PC-3 (cell line): ENCODE measurements at regions of chr12 and their contacts with region 1.

Region 1: DNA sequence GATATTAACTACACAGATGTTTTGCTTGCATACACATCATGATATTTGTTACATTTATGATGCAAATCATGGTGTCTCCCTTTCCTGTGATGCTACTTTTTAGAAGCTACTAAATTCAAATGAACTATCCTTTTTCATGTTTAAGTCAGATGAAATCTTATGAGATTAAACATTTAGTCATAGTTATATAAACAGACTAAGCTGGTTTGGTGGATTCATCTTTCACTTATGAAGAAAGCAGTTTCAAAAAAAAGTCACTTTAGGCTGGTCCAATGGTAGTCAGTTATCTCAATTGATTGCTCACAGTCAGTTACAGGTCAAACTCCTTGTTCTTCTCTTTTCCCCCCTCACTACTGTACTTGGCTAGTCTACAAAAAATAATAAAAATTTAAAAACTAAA is 19.7 kb downstream of the SYCP3 start:
- DNase-seq: peak; percentile 75
- ATAC-seq: peak; percentile 97
- H3K4me3 ChIP-seq: no peak overlapping the region
- H3K27ac ChIP-seq: no peak overlapping the region
- H3K4me1 ChIP-seq: peaks cover 15% of the 10 kb centered on the region
- H3K27me3 ChIP-seq: no peaks in the 10 kb centered on the region
- CTCF ChIP-seq: no peak

Region 2: DNA sequence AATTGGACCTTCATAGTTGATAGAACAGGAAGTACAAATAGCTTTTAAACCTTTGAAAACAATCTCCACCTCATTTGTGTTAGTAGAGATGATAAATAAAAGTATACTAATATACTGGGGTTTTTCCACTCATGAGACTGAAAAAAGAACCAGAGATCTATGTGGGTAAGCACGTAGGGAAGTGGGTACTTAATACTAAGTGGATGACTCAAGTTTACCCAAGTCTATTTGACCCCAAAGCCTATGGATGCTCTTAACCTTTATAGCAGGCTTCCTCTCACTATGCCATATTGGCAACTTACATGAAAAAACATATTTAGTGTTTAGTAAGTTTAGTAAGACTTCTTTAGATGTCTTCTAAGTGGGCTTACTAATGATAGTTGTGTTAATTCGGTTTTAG is 71.4 kb before region 1 on chr12:
- CTCF ChIA-PET with region 1: no interaction called
- POLR2A ChIA-PET with region 1: interaction called, 13 read pairs
- intact Hi-C with region 1: no loop called
- DNase-seq: no peak
- ATAC-seq: no peak
- H3K4me3 ChIP-seq: no peak overlapping the region
- H3K27ac ChIP-seq: no peak overlapping the region
- H3K4me1 ChIP-seq: no peaks in the 10 kb centered on the region
- H3K27me3 ChIP-seq: peaks cover 45% of the 10 kb centered on the region
- CTCF ChIP-seq: no peak